ENCODE measurements at regions of chr11 and their contacts with region 1.

Region 1: DNA sequence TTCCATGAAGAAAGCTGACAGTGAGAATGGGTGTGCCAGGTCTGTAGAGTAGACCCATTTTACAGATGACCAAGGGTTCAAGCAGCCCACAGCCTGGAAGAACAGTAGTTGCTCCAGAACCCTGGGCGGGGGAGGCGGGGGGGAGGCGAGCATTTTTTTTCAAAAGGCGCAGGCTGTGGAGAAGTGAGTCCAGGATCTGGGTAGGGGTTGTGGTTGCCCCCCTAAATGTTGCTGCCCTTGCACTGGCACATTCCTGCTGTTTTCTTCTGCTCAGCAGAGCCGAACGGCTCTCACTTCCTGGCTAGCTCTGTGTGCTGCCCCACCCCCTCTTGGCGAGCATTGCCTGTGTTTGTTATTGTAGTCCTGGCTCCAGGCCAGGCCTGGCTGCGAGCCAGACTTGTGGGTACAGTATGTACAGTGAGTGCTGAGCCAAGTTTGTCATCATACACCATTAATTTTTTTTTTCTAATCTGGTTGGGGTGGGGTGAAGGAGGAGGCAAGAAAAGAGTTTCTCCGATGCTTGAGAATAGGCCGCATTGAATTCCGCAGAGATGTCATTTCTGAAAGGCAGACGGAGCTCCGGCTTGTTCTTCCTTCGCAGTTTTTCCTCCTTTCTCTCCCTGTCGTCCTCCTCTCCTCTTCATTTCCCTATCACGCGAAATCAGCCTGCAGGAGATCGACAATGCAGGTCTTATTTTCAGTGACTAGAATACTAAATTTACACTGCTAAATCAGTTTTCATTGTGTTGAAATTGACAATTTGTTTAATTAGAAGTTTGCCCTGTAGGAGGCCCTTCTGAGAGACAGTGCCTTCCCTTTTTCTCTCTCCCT is 100.5 kb downstream of the ZBTB16 start:
- DNase-seq: peak; percentile 99 to 100 (median 99)
- ATAC-seq: peak; percentile 69 to 71
- H3K4me3 ChIP-seq: peak overlapping the region; percentile 18
- H3K27ac ChIP-seq: peak overlapping the region; percentile 99
- H3K4me1 ChIP-seq: peaks cover 80% of the 10 kb centered on the region
- H3K27me3 ChIP-seq: no peaks in the 10 kb centered on the region

Region 2: DNA sequence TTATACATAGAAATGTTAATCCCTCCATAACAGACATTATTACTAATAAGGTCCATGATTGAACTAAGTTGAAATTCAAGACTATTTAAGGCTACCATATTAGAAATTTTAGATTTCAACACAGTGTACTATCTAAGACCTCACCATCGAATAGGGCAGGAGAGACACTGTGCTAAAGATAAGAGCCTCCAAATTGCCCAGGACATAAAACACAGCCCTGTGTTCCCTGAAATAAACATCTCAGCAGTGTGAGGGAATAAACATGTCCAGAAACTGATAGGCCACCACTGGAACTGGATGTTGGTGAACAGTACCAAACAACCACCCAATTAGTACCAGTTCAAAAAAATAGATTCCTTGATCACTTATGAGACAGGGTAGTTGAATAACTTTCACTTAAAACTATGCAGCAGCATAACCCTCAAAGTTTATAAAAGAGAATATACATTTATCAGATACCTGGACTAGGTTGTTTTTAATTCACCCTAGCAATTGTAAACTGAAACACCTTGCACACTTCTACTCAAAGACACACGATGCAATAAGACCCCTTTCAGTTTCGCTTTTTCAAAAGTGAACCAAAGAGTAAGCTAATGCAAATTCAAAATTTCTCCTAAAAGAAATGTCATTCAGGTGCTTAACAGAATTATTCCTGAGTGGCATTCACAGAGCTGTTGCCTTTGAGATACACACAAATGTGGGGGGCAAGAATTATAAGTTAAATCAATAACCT is 318.9 kb before region 1 on chr11:
- intact Hi-C with region 1: no loop called
- DNase-seq: no peak
- ATAC-seq: peak in 1 of 2 donors; percentile 60
- H3K4me3 ChIP-seq: no peak overlapping the region
- H3K27ac ChIP-seq: no peak overlapping the region
- H3K4me1 ChIP-seq: peaks cover 3% of the 10 kb centered on the region
- H3K27me3 ChIP-seq: no peaks in the 10 kb centered on the region

Region 3: GRCh38 chr11:114075891-114076441 is 84.1 kb before region 1 on chr11:
- intact Hi-C with region 1: loop called in 1 of 4 experiments (anchors 10 kb)
- DNase-seq: peak; percentile 60 to 80 (median 71)
- ATAC-seq: no peak
- H3K4me3 ChIP-seq: no peak overlapping the region
- H3K27ac ChIP-seq: peak overlapping the region; percentile 66
- H3K4me1 ChIP-seq: peaks cover 58% of the 10 kb centered on the region
- H3K27me3 ChIP-seq: no peaks in the 10 kb centered on the region

Measured in right cardiac atrium (tissue), 5 donors.